Dorsolateral prefrontal cortex (tissue), 120 donors: ENCODE measurements at regions of chr9 and their contacts with region 1.

Region 1: DNA sequence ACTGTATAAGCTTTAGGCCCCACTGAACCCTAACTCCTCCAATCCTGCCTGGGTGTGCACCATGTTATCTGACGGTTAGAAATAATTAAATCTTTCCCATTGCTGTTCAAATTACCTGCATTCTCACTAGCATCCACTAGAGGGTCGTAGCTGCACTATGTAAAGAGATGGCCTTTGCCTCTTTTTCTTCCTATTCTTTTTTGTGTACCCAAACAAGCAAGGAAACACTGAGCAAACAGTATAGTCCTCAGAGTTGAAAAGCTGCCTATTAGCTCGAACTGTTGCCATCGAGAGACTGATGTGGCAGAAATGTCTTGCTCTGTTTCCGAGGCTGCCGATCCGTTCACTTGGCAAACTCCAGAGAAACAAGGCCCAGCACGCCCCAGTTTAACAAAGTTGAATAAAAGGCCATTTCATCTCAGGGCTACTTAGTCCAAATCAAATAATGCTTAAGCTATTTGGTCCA is 163.8 kb upstream of the TRPM3 start:
- DNase-seq: peak in 5 of 10 donors; percentile 12 to 64 (median 44)
- H3K4me3 ChIP-seq: peak overlapping the region in 12 of 59 donors; percentile 5 to 44 (median 28)
- H3K27ac ChIP-seq: peak overlapping the region in 11 of 59 donors; percentile 7 to 73 (median 40)
- H3K27me3 ChIP-seq: no peaks in the 10 kb centered on the region
- CTCF ChIP-seq: peak; percentile 60 to 94 (median 81)

Region 2: DNA sequence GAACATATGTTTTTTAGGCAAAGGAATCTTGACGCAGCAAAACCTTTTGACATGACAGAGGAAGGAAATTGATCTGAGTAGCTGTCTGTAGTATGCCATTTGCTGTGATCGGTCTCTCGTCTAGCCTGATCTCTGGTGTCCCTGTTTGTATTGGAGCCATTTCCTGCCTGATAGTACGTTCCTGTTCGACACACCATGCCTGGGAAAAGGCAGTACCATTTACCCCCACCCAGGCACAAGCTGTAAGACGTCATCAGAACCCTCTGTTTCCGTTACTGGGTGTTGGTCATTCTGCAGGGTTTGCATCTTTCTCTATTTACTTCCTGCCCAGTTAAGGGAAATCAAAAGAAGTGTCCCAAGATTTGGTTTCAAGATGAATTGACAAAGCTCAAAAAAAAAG is 353.4 kb after region 1 on chr9:
- intact Hi-C with region 1: loop called in 1 of 2 experiments (anchors 10 kb)
- DNase-seq: peak in 1 of 10 donors; percentile 11
- H3K4me3 ChIP-seq: no peak overlapping the region
- H3K27ac ChIP-seq: peak overlapping the region in 5 of 59 donors; percentile 1 to 42 (median 28)
- H3K27me3 ChIP-seq: no peaks in the 10 kb centered on the region
- CTCF ChIP-seq: no peak